ENCODE measurements at regions of chr3 and their contacts with region 1.

Region 1: DNA sequence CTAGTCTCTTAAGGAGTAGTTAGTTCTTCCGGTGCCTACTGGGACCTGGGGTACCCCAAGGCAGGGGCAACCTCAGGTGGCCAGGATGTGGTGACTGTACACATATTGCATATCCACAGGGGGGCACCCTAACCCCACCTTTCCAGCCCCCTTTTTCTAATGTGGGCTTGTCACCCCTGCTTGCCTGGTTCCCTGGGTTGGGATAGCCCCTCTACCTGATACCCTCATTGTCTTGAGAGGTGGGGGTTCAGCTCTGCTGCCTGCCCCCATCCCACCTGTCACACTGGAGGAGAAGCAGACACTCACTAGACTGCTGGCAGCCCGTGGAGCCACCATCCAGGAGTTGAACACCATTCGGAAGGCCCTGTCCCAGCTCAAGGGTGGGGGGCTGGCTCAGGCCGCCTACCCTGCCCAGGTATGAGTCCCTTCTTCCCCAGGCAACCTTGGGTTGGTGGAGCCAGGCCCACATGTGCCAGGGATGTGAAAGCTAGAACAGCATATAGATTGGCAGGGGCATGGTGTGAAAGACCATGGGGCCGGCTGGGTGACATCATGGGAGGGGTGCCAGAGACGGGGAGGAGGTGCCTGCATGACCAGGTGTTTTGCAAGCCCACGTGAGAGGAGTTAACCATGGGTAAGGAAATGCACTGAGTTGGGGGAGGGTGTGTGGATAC is 4.0 kb downstream of the GLYCTK start:
- DNase-seq: peak in 7 of 9 experiments; percentile 33 to 70 (median 60)
- ATAC-seq: peak; percentile 32
- H3K4me3 ChIP-seq: no peak overlapping the region
- H3K4me3 Mint-ChIP-seq: peak overlapping the region; percentile 37
- H3K27ac ChIP-seq: no peak overlapping the region
- H3K27ac Mint-ChIP-seq: no peak overlapping the region
- H3K4me1 ChIP-seq: peaks cover 33% of the 10 kb centered on the region
- H3K4me1 Mint-ChIP-seq: peaks cover 37% of the 10 kb centered on the region
- H3K27me3 ChIP-seq: no peaks in the 10 kb centered on the region
- H3K27me3 Mint-ChIP-seq: no peaks in the 10 kb centered on the region
- CTCF ChIP-seq: peak; percentile 49

Region 2: GRCh38 chr3:52154117-52155094 is 137.2 kb before region 1 on chr3 and contains the start of gene POC1A:
- CTCF ChIA-PET with region 1: no interaction called
- POLR2A ChIA-PET with region 1: no interaction called
- intact Hi-C with region 1: loop called in 1 of 2 experiments (anchors 5 kb)
- DNase-seq: peak; percentile 61 to 91 (median 83)
- ATAC-seq: peak; percentile 85
- H3K4me3 ChIP-seq: peak within 1 kb of the TSS; percentile 98 to 99
- H3K4me3 Mint-ChIP-seq: peak within 1 kb of the TSS; percentile 96
- H3K27ac ChIP-seq: peak within 1 kb of the TSS; percentile 71 to 91
- H3K27ac Mint-ChIP-seq: peak within 1 kb of the TSS; percentile 96
- H3K4me1 ChIP-seq: peaks cover 7% of the 10 kb centered on the region
- H3K4me1 Mint-ChIP-seq: peaks cover 10% of the 10 kb centered on the region
- H3K27me3 ChIP-seq: no peaks in the 10 kb centered on the region
- H3K27me3 Mint-ChIP-seq: no peaks in the 10 kb centered on the region
- CTCF ChIP-seq: no peak
- total RNA-seq, gene POC1A: 0.24 to 0.42 TPM

Region 3: GRCh38 chr3:52278510-52279069 is 13.1 kb before region 1 on chr3 and contains the start of gene WDR82:
- CTCF ChIA-PET with region 1: interaction called, 31 read pairs
- POLR2A ChIA-PET with region 1: interaction called, 43 read pairs
- intact Hi-C with region 1: loop called (anchors 1 kb)
- DNase-seq: peak; percentile 94 to 99 (median 98)
- ATAC-seq: peak; percentile 77
- H3K4me3 ChIP-seq: peak within 1 kb of the TSS; percentile 65 to 95
- H3K4me3 Mint-ChIP-seq: peak within 1 kb of the TSS; percentile 94
- H3K27ac ChIP-seq: peak within 1 kb of the TSS; percentile 79 to 93
- H3K27ac Mint-ChIP-seq: peak within 1 kb of the TSS; percentile 99
- H3K4me1 ChIP-seq: peaks cover 49% of the 10 kb centered on the region
- H3K4me1 Mint-ChIP-seq: peaks cover 72% of the 10 kb centered on the region
- H3K27me3 ChIP-seq: no peaks in the 10 kb centered on the region
- H3K27me3 Mint-ChIP-seq: no peaks in the 10 kb centered on the region
- CTCF ChIP-seq: peak; percentile 36
- total RNA-seq, gene WDR82: 115 to 117 TPM

Region 4: GRCh38 chr3:52317208-52318000 is 25.8 kb after region 1 on chr3:
- CTCF ChIA-PET with region 1: no interaction called
- POLR2A ChIA-PET with region 1: no interaction called
- intact Hi-C with region 1: loop called in 1 of 2 experiments (anchors 2 kb)
- DNase-seq: peak; percentile 48 to 84 (median 73)
- ATAC-seq: peak; percentile 100
- H3K4me3 ChIP-seq: peak overlapping the region; percentile 36 to 59
- H3K4me3 Mint-ChIP-seq: peak overlapping the region; percentile 69
- H3K27ac ChIP-seq: no peak overlapping the region
- H3K27ac Mint-ChIP-seq: no peak overlapping the region
- H3K4me1 ChIP-seq: peaks cover 12% of the 10 kb centered on the region
- H3K4me1 Mint-ChIP-seq: peaks cover 11% of the 10 kb centered on the region
- H3K27me3 ChIP-seq: no peaks in the 10 kb centered on the region
- H3K27me3 Mint-ChIP-seq: no peaks in the 10 kb centered on the region
- CTCF ChIP-seq: no peak

Region 5: GRCh38 chr3:52444860-52445793 is 153.5 kb after region 1 on chr3 and contains the start of gene SEMA3G:
- CTCF ChIA-PET with region 1: interaction called, 4 read pairs
- POLR2A ChIA-PET with region 1: no interaction called
- intact Hi-C with region 1: loop called in 1 of 2 experiments (anchors 1 kb)
- DNase-seq: peak; percentile 46 to 80 (median 71)
- ATAC-seq: peak; percentile 95
- H3K4me3 ChIP-seq: no peak within 1 kb of the TSS
- H3K4me3 Mint-ChIP-seq: no peak within 1 kb of the TSS
- H3K27ac ChIP-seq: no peak within 1 kb of the TSS
- H3K27ac Mint-ChIP-seq: no peak within 1 kb of the TSS
- H3K4me1 ChIP-seq: peaks cover 16% of the 10 kb centered on the region
- H3K4me1 Mint-ChIP-seq: peaks cover 7% of the 10 kb centered on the region
- H3K27me3 ChIP-seq: no peaks in the 10 kb centered on the region
- H3K27me3 Mint-ChIP-seq: no peaks in the 10 kb centered on the region
- CTCF ChIP-seq: peak; percentile 51
- total RNA-seq, gene SEMA3G: 0.05 TPM in 1 of 2 experiments, not detected in the other

Region 6: GRCh38 chr3:52507359-52507758 is 215.7 kb after region 1 on chr3:
- CTCF ChIA-PET with region 1: no interaction called
- POLR2A ChIA-PET with region 1: no interaction called
- intact Hi-C with region 1: no loop called
- DNase-seq: no peak
- ATAC-seq: no peak
- H3K4me3 ChIP-seq: no peak overlapping the region
- H3K4me3 Mint-ChIP-seq: no peak overlapping the region
- H3K27ac ChIP-seq: no peak overlapping the region
- H3K27ac Mint-ChIP-seq: no peak overlapping the region
- H3K4me1 ChIP-seq: no peaks in the 10 kb centered on the region
- H3K4me1 Mint-ChIP-seq: no peaks in the 10 kb centered on the region
- H3K27me3 ChIP-seq: no peaks in the 10 kb centered on the region
- H3K27me3 Mint-ChIP-seq: no peaks in the 10 kb centered on the region
- CTCF ChIP-seq: no peak

Region 7: DNA sequence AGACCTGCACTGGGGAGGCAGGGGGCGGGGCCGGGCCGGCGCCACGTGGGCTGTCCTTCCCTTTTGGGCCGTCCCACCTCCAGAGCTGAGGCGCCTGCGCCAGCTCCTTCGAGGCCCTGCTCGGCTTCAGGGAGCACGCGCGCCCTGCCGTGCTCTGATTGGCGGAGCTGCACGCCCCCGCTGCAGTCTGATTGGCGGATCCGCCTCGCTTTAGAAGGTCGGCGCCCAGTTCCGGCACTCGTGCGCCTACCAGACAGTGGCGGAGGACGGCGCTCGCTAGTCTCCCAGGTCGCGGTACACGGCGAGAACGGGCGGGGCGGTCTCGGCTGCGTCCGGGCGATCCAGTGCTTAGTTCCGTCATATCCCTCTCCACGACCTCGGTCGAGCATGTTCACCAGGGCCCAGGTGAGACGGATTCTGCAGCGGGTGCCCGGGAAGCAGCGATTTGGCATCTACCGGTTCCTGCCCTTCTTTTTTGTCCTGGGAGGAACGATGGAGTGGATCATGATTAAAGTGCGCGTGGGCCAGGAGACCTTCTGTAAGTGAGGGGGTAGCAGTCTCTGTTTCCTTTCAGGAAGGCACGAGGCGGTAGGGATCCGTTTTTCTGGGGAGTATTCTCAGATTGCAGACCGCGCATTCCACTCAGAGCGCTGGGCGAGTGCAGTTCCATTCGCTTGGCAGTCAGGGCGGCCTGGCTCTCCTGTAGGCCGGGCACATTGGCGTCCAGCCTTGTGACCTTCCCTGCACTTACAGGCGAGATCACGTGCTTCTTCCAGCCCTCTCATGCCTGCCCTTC is 244.9 kb after region 1 on chr3 and contains the start of gene UQCC5:
- CTCF ChIA-PET with region 1: no interaction called
- POLR2A ChIA-PET with region 1: no interaction called
- intact Hi-C with region 1: loop called in 1 of 2 experiments (anchors 1 kb)
- DNase-seq: peak; percentile 92 to 99 (median 95)
- ATAC-seq: peak; percentile 88
- H3K4me3 ChIP-seq: peak within 1 kb of the TSS; percentile 79 to 88
- H3K4me3 Mint-ChIP-seq: peak within 1 kb of the TSS; percentile 99
- H3K27ac ChIP-seq: peak within 1 kb of the TSS; percentile 82 to 83
- H3K27ac Mint-ChIP-seq: peak within 1 kb of the TSS; percentile 98
- H3K4me1 ChIP-seq: peaks cover 41% of the 10 kb centered on the region
- H3K4me1 Mint-ChIP-seq: peaks cover 55% of the 10 kb centered on the region
- H3K27me3 ChIP-seq: peaks cover 0 to 8% of the 10 kb centered on the region in 2 experiments
- H3K27me3 Mint-ChIP-seq: no peaks in the 10 kb centered on the region
- CTCF ChIP-seq: no peak
- total RNA-seq, gene UQCC5: 5.2 to 6.8 TPM

Region 8: DNA sequence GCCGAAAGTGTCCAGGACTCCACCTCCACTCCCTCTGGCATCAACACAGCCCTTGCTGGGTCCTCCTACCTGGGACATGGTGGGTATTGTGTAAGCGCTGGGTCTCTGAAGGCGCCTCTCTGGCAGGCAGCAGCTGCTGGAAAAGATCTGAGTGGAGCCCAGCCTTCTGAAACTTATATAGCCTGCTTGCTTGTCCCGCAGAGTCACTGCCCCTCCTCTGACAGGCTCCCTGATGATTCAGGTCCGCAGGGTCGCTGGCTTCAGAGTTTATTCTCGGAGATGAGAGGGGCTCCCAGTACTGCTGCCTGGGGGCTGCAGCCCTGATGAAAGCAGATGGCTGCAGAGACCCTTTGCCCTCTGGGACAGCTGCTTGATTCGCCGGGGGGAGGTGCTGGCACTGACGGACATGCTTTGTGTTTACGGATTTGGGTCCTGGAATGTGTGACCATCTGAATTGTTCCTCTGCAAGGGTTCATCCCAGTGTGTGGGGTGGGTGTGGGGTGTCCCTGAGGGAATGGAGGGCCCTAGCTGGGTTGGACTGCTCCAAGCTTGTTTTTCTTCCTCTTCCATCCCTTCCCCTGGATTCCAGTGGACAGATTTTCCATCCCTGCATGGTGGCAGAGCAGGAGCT is 543.3 kb after region 1 on chr3 and contains the start of gene MUSTN1:
- CTCF ChIA-PET with region 1: no interaction called
- POLR2A ChIA-PET with region 1: no interaction called
- intact Hi-C with region 1: no loop called
- DNase-seq: no peak
- ATAC-seq: no peak
- H3K4me3 ChIP-seq: no peak within 1 kb of the TSS
- H3K4me3 Mint-ChIP-seq: no peak within 1 kb of the TSS
- H3K27ac ChIP-seq: no peak within 1 kb of the TSS
- H3K27ac Mint-ChIP-seq: no peak within 1 kb of the TSS
- H3K4me1 ChIP-seq: peaks cover 21% of the 10 kb centered on the region
- H3K4me1 Mint-ChIP-seq: peaks cover 25% of the 10 kb centered on the region
- H3K27me3 ChIP-seq: no peaks in the 10 kb centered on the region
- H3K27me3 Mint-ChIP-seq: no peaks in the 10 kb centered on the region
- CTCF ChIP-seq: no peak
- total RNA-seq, gene MUSTN1: 3.4 to 6.7 TPM